ENCODE measurements at regions of chr6 and their contacts with region 1.

Region 1: DNA sequence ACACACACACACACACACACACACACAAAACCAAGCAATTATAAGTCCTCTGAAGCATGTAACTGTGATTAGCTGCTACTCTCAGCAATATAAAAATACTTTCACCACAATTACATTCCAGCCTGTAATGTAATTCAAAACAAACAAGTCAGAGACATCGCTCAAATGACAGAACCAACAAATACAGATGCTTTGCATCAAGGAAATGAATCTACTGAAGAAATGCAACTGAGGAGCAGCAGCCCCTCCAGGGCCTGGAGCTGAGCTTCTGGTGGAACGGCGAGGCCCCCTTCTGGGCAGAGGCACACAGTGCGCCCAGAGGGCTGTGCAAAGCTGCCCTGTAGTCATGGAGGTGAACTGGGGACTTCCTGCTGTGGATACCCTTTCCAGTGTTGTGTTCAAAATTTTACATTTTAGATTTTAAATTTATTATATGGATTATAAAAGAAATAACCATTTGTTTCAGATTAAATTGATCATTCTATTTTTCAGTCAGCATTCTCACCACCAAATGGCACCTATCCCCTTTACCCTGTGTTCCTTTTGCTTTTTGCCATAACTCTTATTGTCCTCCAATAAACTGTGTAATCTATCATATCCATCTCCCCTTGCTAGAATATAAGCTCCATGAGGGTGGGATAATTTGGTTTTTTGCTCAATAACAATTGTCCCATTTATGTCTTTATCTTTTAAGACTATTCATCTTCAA is 23.2 kb downstream of the ADAT2 start:
- DNase-seq: peak; percentile 81 to 89
- ATAC-seq: peak; percentile 94
- H3K4me3 ChIP-seq: no peak overlapping the region
- H3K27ac ChIP-seq: no peak overlapping the region
- H3K4me1 ChIP-seq: peaks cover 0 to 3% of the 10 kb centered on the region in 2 donors
- H3K27me3 ChIP-seq: no peaks in the 10 kb centered on the region

Region 2: GRCh38 chr6:143098054-143098671 is 329.1 kb before region 1 on chr6:
- intact Hi-C with region 1: no loop called
- DNase-seq: no peak
- ATAC-seq: no peak
- H3K4me3 ChIP-seq: no peak overlapping the region
- H3K27ac ChIP-seq: no peak overlapping the region
- H3K4me1 ChIP-seq: peaks cover 0 to 1% of the 10 kb centered on the region in 2 donors
- H3K27me3 ChIP-seq: no peaks in the 10 kb centered on the region

Region 3: GRCh38 chr6:143232849-143233248 is 194.4 kb before region 1 on chr6:
- intact Hi-C with region 1: loop called (anchors 5 kb)
- DNase-seq: peak; percentile 64 to 78
- ATAC-seq: no peak
- H3K4me3 ChIP-seq: no peak overlapping the region
- H3K27ac ChIP-seq: no peak overlapping the region
- H3K4me1 ChIP-seq: no peaks in the 10 kb centered on the region
- H3K27me3 ChIP-seq: no peaks in the 10 kb centered on the region

Region 4: DNA sequence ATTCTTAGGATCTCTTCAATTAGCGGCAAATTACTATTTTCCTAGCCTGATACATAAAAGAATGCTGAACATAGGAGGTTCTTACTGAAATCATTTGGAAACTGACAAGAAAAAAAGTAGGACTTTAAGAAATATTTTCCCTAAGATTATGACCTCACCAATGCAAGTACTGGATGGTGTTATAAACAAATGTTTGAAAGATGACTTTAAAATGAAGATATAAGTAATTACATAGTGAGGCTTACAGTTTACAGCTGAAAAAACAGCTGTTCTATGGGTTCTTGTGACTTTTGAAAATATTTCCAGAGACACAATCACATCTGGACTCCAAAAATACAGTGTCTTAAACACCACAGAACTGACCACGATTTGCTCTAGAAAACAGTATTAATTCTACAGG is 41.6 kb before region 1 on chr6:
- intact Hi-C with region 1: no loop called
- DNase-seq: no peak
- ATAC-seq: no peak
- H3K4me3 ChIP-seq: no peak overlapping the region
- H3K27ac ChIP-seq: no peak overlapping the region
- H3K4me1 ChIP-seq: no peaks in the 10 kb centered on the region
- H3K27me3 ChIP-seq: no peaks in the 10 kb centered on the region

Measured in aorta (tissue), 5 donors.